Activated T-helper 1 cell treated with anti-CD3 and anti-CD28 coated beads, Interleukin-12 subunit alpha, Interleukin-12 subunit beta, Interleukin-2, Interleukin-4 antibody, amounts not matched to agents 30 ng/mL and 10 ng/mL and 1 ng/mL, durations not matched to agents 14 hours and 24 hours and 36 hours (primary cell): ENCODE measurements at regions of chrX and their contacts with region 1.

Region 1: DNA sequence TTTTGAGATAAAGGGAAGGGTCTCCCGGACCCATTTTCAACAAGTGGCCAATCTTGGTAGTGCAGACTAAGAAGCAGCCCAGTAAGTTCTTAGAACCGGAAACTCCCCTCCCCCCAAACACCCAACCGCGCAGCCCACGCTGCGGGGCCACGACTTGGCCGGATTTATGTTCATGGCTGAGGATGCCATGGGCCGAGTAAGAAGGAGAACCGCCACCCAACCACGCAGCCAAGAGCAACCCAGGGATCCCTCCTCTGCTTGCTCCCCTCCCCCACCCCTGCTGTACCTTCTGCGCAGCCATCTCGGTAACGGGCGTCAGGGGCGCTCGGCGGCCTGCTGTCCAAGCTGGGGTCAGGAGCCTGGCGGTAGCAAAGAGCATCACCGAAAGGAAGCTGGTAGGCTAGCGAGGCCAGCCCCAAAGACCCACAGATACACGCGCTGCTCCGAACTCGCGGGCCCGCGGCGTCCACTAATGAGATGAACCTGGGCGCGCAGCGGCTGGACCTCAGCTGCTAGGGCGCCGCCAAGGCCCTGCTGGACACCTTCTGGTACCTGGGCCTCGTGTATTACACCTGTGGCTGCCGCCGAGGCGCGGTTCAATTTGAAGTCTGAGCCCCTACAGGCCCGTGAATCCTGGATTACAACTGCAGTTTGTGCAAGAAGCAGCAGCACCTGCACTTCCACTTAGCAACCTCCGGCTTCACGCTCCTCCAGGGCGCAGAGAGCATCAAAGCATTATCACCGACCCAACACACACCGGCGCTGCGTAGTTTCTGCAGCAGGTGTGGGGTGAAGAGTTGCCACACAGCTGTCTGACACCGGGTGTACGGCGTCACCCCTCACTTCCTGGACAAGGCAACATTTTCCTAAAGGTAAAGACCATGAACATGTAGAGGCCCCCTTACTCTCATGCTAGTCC is 63.4 kb downstream of the NUDT10 start:
- DNase-seq: peak; percentile 17
- H3K4me3 Mint-ChIP-seq: peak overlapping the region; percentile 83
- H3K27ac Mint-ChIP-seq: peak overlapping the region; percentile 81
- H3K4me1 Mint-ChIP-seq: peaks cover 5% of the 10 kb centered on the region
- H3K27me3 Mint-ChIP-seq: no peaks in the 10 kb centered on the region

Region 2: GRCh38 chrX:51406688-51407461 is 10.8 kb after region 1 on chrX:
- intact Hi-C with region 1: no loop called
- DNase-seq: no peak
- H3K4me3 Mint-ChIP-seq: no peak overlapping the region
- H3K27ac Mint-ChIP-seq: no peak overlapping the region
- H3K4me1 Mint-ChIP-seq: no peaks in the 10 kb centered on the region
- H3K27me3 Mint-ChIP-seq: no peaks in the 10 kb centered on the region

Region 3: GRCh38 chrX:51420610-51421009 is 24.5 kb after region 1 on chrX:
- intact Hi-C with region 1: loop called (anchors 1 kb)
- DNase-seq: peak; percentile 5
- H3K4me3 Mint-ChIP-seq: no peak overlapping the region
- H3K27ac Mint-ChIP-seq: no peak overlapping the region
- H3K4me1 Mint-ChIP-seq: no peaks in the 10 kb centered on the region
- H3K27me3 Mint-ChIP-seq: no peaks in the 10 kb centered on the region

Region 4: DNA sequence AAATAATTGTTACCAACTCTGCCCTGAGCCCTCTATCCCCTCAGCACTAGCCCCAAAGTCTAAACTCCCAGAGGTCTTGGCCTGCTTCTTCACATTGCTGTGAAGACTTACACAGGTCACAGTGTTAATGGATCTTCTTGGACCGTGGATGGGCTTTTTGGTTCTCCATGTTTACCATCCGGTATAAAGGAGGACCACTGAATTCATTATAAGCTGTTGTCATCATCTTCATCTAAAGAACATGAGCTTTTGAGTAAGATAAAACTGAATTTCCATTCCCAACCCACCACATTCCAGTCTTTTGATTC is 91.8 kb after region 1 on chrX:
- intact Hi-C with region 1: no loop called
- DNase-seq: no peak
- H3K4me3 Mint-ChIP-seq: no peak overlapping the region
- H3K27ac Mint-ChIP-seq: no peak overlapping the region
- H3K4me1 Mint-ChIP-seq: no peaks in the 10 kb centered on the region
- H3K27me3 Mint-ChIP-seq: peaks cover 4% of the 10 kb centered on the region